ENCODE measurements at regions of chr4 and their contacts with region 1.

Region 1: GRCh38 chr4:76689241-76689817 is 208.6 kb downstream of the SOWAHB start:
- DNase-seq: peak; percentile 34 to 72
- H3K4me3 ChIP-seq: peak overlapping the region; percentile 70 to 88
- H3K27ac ChIP-seq: peak overlapping the region; percentile 90 to 95
- H3K4me1 ChIP-seq: peaks cover 0 to 52% (median 33%) of the 10 kb centered on the region in 4 donors
- H3K27me3 ChIP-seq: no peaks in the 10 kb centered on the region
- CTCF ChIP-seq: no peak

Region 2: DNA sequence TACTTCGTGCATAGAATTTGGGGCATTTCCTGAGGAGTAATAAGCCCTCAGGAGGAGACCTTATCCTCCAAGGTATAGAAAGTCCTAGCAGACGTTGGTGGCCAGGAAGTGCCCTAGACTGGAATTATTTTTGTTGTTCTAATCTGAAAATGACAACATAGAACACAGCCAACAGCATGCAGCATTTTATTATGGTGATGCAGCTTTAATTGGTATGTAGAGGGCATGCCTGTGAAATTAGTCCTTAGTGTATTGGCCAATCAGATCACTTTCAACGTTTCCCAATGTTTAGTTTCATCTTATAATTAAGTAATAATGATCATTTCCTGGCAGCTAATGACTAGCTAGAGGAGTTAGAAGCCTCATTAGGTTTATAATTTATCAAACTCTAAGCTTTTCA is 55.1 kb before region 1 on chr4:
- intact Hi-C with region 1: loop called (anchors 10 kb)
- DNase-seq: no peak
- H3K4me3 ChIP-seq: no peak overlapping the region
- H3K27ac ChIP-seq: peak overlapping the region; percentile 36 to 47
- H3K4me1 ChIP-seq: peaks cover 0 to 64% (median 24%) of the 10 kb centered on the region in 4 donors
- H3K27me3 ChIP-seq: no peaks in the 10 kb centered on the region
- CTCF ChIP-seq: no peak

Measured in tibial artery (tissue), 4 donors.